PC-3 (cell line): ENCODE measurements at regions of chr10 and their contacts with region 1.

Region 1: GRCh38 chr10:35824704-35825103 is 182.6 kb upstream of the FZD8 start:
- DNase-seq: no peak
- ATAC-seq: no peak
- H3K4me3 ChIP-seq: no peak overlapping the region
- H3K27ac ChIP-seq: no peak overlapping the region
- H3K4me1 ChIP-seq: no peaks in the 10 kb centered on the region
- H3K27me3 ChIP-seq: no peaks in the 10 kb centered on the region
- CTCF ChIP-seq: no peak

Region 2: GRCh38 chr10:35778306-35778705 is 46.4 kb before region 1 on chr10:
- CTCF ChIA-PET with region 1: no interaction called
- POLR2A ChIA-PET with region 1: no interaction called
- intact Hi-C with region 1: no loop called
- DNase-seq: no peak
- ATAC-seq: no peak
- H3K4me3 ChIP-seq: no peak overlapping the region
- H3K27ac ChIP-seq: no peak overlapping the region
- H3K4me1 ChIP-seq: peaks cover 21% of the 10 kb centered on the region
- H3K27me3 ChIP-seq: no peaks in the 10 kb centered on the region
- CTCF ChIP-seq: no peak

Region 3: GRCh38 chr10:35803046-35803445 is 21.7 kb before region 1 on chr10:
- CTCF ChIA-PET with region 1: interaction called, 4 read pairs
- POLR2A ChIA-PET with region 1: interaction called, 18 read pairs
- intact Hi-C with region 1: no loop called
- DNase-seq: no peak
- ATAC-seq: no peak
- H3K4me3 ChIP-seq: no peak overlapping the region
- H3K27ac ChIP-seq: no peak overlapping the region
- H3K4me1 ChIP-seq: no peaks in the 10 kb centered on the region
- H3K27me3 ChIP-seq: no peaks in the 10 kb centered on the region
- CTCF ChIP-seq: no peak